A673 (cell line): ENCODE measurements at regions of chr7 and their contacts with region 1.

Region 1: GRCh38 chr7:82729172-82730030 is 285.8 kb upstream of the CACNA2D1 start:
- DNase-seq: peak; percentile 66
- H3K4me3 ChIP-seq: no peak overlapping the region
- H3K27ac ChIP-seq: no peak overlapping the region
- H3K4me1 ChIP-seq: no peaks in the 10 kb centered on the region
- H3K27me3 ChIP-seq: no peaks in the 10 kb centered on the region
- CTCF ChIP-seq: peak; percentile 78

Region 2: DNA sequence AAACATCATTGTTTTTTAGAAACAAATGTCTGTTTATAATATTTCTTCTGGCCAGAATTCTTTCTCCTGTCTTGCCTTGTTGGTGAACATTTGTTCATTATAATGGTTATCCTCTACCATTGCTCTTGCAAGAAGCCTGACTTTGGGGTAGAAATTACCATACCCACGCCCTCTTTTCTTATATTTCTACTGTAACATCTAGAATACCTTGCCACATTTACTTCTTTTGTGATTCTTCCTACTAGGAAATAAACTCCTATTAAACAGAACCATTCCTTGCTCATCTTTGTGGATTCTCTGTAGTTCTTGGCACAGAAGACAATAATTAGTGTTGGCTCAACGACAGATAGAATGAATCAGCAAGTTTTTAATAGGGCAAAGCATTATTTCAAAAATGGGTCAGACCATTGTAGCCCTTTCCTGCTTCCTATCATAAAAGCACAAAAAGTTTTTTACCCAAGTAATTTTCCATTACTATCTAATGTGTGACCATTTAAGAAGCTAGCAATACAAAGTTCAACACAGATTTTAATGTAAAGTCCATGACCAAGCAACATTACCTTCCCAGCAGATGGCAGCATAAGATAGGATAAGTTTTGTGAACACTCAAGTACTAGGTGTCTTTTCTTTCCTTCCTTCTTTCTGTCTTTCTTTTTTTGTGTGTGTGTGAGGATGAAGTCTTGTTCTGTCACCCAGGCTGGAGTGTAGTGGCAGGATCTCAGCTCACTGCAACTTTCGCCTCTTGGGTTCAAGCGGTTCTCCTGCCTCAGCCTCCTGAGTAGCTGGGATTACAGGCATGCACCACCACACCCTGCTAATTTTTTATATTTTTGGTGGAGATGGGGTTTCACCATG is 1229.9 kb before region 1 on chr7:
- CTCF ChIA-PET with region 1: interaction called, 4 read pairs
- POLR2A ChIA-PET with region 1: no interaction called
- intact Hi-C with region 1: loop called (anchors 1 kb)
- DNase-seq: peak; percentile 93
- H3K4me3 ChIP-seq: no peak overlapping the region
- H3K27ac ChIP-seq: peak overlapping the region; percentile 71
- H3K4me1 ChIP-seq: peaks cover 27% of the 10 kb centered on the region
- H3K27me3 ChIP-seq: no peaks in the 10 kb centered on the region
- CTCF ChIP-seq: peak; percentile 71

Region 3: DNA sequence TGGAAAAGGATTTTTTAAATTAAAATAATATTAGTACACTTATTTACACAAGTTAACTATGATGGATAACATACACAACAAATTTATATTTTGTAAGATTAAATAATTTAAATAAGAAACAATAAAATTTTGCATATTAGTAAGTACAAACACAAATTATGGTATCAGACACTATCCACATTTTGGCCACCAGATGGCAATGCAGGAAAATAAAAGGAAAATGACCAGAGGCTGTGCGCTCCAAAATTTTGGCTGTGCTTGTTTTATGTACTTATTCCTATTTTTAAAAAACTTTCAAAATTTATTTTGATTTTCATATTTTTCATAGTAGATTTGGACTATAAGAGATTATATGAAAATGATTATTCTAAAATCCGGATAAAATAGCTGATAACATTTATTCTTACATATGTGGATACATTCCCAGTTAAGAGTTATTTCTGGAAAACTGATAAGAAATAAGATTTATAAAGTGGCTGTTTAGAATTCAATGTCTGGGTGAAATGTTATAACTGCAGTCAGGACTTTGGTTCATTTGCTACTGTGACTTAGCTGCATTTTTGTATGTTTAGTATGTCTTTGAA is 684.8 kb before region 1 on chr7:
- CTCF ChIA-PET with region 1: no interaction called
- POLR2A ChIA-PET with region 1: no interaction called
- intact Hi-C with region 1: loop called (anchors 2 kb)
- DNase-seq: peak; percentile 70
- H3K4me3 ChIP-seq: no peak overlapping the region
- H3K27ac ChIP-seq: no peak overlapping the region
- H3K4me1 ChIP-seq: peaks cover 17% of the 10 kb centered on the region
- H3K27me3 ChIP-seq: no peaks in the 10 kb centered on the region
- CTCF ChIP-seq: peak; percentile 76

Region 4: DNA sequence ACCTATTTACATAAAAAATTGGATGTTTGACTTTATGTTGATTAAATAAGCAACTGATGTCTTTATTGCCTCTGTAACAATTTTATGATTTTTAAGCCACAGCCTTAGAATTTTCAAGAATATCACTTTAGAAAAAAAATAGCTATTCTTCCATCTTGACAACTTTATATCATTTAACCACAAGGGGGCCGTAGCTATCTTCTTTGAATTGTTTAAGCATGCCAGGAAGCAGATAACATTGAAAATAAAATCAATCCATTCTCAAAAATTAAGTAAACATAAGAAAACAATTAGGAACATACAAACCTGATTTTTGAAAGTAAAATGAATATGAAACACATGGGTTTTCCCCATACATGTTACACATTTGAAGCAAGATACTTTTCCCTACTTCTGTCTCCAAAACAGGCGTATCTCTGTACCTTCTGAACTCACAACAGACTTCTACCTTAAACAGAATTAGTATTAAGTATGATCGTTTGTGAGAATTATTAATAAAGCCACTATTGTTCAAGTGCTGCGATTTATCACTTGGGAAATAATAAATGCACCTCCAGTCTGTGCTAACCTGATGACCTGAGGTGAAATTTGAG is 494.8 kb before region 1 on chr7:
- CTCF ChIA-PET with region 1: no interaction called
- POLR2A ChIA-PET with region 1: no interaction called
- intact Hi-C with region 1: loop called (anchors 10 kb)
- DNase-seq: peak; percentile 78
- H3K4me3 ChIP-seq: no peak overlapping the region
- H3K27ac ChIP-seq: no peak overlapping the region
- H3K4me1 ChIP-seq: peaks cover 49% of the 10 kb centered on the region
- H3K27me3 ChIP-seq: no peaks in the 10 kb centered on the region
- CTCF ChIP-seq: peak; percentile 80

Region 5: DNA sequence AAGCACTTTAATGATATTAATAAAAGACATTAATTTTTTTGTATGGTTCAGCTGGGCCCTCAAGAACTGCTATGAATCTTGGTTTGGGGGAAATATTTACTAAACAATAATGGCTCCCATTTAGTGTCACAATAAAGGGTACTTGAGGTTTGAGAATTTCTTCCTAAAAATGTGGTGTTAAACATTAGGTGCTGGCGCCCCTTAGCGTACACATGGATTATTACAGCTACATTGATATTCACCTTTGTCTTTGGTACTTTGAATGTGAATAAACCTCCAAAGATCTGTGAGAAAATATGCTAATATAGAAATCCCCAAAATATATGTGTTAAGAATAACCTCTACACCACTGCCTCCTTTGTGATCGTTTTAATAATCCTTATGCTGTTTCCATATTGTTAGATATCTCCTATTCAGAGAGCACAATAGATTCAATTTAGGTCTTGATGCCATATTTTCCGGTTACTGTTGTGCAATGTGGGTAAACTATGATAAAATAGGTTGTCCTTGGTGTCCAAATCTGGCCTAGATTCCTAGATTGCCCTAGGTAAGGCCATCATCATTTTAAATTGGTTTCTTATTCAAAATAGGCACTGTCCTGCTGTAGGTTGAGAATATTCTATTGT is 124.0 kb before region 1 on chr7:
- CTCF ChIA-PET with region 1: no interaction called
- POLR2A ChIA-PET with region 1: no interaction called
- intact Hi-C with region 1: loop called (anchors 2 kb)
- DNase-seq: peak; percentile 74
- H3K4me3 ChIP-seq: no peak overlapping the region
- H3K27ac ChIP-seq: no peak overlapping the region
- H3K4me1 ChIP-seq: peaks cover 4% of the 10 kb centered on the region
- H3K27me3 ChIP-seq: no peaks in the 10 kb centered on the region
- CTCF ChIP-seq: peak; percentile 84